Activated CD4-positive, alpha-beta T cell treated with anti-CD3 and anti-CD28 coated beads for 36 hours (primary cell): ENCODE measurements at regions of chr15 and their contacts with region 1.

Region 1: GRCh38 chr15:68252925-68253534 is 23.5 kb upstream of the CLN6 start:
- DNase-seq: peak; percentile 53
- ATAC-seq: peak; percentile 51
- H3K4me3 Mint-ChIP-seq: no peak overlapping the region
- H3K27ac Mint-ChIP-seq: no peak overlapping the region
- H3K4me1 Mint-ChIP-seq: peaks cover 2% of the 10 kb centered on the region
- H3K27me3 Mint-ChIP-seq: no peaks in the 10 kb centered on the region

Region 2: DNA sequence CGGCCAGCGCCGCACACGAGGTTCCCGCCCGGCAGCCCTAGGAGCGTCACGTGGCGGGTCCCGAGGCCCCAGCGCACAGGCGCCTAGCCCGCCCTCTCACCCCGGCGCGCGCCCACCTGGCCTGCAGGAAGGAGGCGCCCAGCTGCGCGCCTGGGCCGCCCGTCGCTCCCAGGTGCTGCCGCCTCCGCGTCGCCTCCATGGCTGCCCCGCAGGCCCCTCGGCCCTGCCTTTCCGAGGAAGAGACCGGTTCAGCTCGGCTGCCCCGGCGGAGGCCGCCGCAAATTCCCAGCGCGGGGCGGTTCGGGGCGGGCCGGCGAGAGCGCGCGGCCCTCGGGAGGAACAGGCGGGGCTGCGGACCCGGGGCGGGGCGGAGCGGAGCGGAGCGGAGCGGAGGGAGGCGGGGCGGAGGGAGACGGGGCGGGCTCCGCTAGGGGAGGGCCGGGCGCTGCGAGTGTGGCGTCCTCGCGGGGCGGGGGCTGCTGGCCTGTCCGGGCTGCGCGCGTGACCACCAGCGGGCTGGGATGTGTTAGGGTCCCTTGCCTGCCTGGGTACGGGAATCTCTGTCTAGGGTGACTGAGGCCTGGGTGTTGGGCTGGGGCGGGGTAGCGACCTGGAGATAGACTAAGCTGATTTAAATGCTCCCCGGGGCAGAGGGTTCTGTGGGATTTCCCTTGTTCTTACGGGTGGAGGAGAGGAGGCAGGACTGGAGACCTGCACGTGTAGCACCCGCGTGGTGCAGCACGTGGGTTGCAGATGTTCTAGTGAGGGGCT is 23.5 kb before region 1 on chr15 and contains the start of gene CLN6:
- CTCF ChIA-PET with region 1: interaction called, 6 read pairs
- POLR2A ChIA-PET with region 1: no interaction called
- intact Hi-C with region 1: loop called in 1 of 2 experiments (anchors 2 kb)
- DNase-seq: peak; percentile 88
- ATAC-seq: peak; percentile 88
- H3K4me3 Mint-ChIP-seq: peak within 1 kb of the TSS; percentile 99
- H3K27ac Mint-ChIP-seq: peak within 1 kb of the TSS; percentile 95
- H3K4me1 Mint-ChIP-seq: peaks cover 47% of the 10 kb centered on the region
- H3K27me3 Mint-ChIP-seq: no peaks in the 10 kb centered on the region
- total RNA-seq, gene CLN6: 45.1 to 48.2 TPM

Region 3: DNA sequence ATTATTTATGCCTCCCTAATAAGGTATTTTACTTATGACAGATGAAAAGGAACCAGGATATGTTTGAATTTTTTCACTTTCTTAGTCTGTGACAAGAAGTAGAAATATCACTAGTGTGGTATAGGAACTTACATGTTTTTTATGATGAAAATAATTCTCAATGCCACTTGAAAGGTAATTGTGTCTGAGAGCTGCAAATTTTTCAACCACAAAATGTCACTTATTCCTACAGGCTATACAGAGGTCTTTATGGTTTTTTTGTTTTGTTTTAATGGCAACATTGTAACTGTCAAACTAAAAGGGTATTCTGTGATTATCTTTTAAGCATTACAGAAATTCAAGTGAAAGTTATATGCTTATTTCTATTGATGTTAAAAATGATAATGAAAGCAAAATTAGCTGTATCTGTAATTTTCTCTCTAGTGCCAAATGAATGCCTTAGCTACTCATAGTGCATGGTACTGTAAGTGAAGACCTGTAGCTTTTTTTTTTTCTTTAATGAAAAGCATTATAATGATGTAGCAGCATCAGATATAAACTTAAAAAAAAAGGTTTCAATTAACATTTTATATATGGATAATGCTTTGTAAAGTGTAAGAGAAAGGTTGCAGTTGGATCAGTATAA is 39.2 kb after region 1 on chr15:
- CTCF ChIA-PET with region 1: interaction called, 10 read pairs
- POLR2A ChIA-PET with region 1: no interaction called
- intact Hi-C with region 1: no loop called
- DNase-seq: no peak
- ATAC-seq: peak; percentile 53
- H3K4me3 Mint-ChIP-seq: no peak overlapping the region
- H3K27ac Mint-ChIP-seq: no peak overlapping the region
- H3K4me1 Mint-ChIP-seq: peaks cover 57% of the 10 kb centered on the region
- H3K27me3 Mint-ChIP-seq: no peaks in the 10 kb centered on the region

Region 4: GRCh38 chr15:68304589-68305337 is 51.7 kb after region 1 on chr15:
- CTCF ChIA-PET with region 1: interaction called, 53 read pairs
- POLR2A ChIA-PET with region 1: interaction called, 8 read pairs
- intact Hi-C with region 1: loop called (anchors 1 kb)
- DNase-seq: no peak
- ATAC-seq: no peak
- H3K4me3 Mint-ChIP-seq: no peak overlapping the region
- H3K27ac Mint-ChIP-seq: no peak overlapping the region
- H3K4me1 Mint-ChIP-seq: peaks cover 21% of the 10 kb centered on the region
- H3K27me3 Mint-ChIP-seq: no peaks in the 10 kb centered on the region

Region 5: DNA sequence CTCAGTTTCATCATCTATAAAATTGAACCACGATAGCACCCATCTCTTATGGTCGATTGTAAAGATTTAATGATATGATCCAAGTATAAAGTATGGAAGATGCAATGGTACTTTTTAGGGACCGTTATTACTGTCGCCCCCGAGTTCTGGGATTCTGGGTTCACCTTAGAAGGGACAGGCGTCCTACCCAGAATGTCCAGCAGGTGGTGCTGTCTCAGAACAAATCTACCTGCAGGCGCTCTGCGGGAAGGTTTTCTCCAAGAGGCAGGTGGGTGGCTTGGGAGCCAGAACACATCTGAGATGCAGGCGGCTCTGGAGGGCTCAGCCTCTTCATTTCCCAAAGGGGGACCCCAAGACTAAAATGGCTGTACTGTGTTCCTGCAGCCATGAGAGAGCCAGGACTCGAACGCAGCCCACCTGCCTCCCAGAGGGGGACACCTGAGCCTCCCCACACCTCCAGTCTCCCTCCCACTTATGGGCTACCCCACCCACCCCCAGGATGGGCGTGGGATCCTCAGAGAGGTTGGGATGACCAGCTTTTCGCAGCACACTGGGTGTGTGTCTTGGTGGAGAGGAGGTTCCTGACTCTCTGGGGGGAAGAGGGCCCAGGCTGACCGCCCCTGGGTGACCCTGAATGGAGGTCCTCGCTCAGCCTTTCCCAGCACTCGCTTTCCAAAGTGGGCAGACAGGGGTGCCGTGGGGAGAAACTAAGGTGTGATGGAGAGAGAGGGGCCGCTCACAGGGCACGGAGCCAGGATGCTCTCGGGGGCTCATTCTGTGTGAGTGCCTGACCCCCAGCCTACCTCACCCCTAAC is 297.7 kb after region 1 on chr15:
- CTCF ChIA-PET with region 1: interaction called, 3 read pairs
- POLR2A ChIA-PET with region 1: no interaction called
- intact Hi-C with region 1: loop called in 1 of 2 experiments (anchors 5 kb)
- DNase-seq: peak; percentile 89
- ATAC-seq: no peak
- H3K4me3 Mint-ChIP-seq: no peak overlapping the region
- H3K27ac Mint-ChIP-seq: no peak overlapping the region
- H3K4me1 Mint-ChIP-seq: peaks cover 6% of the 10 kb centered on the region
- H3K27me3 Mint-ChIP-seq: peaks cover 29% of the 10 kb centered on the region